Mammary epithelial cell (primary cell): ENCODE measurements at regions of chr2 and their contacts with region 1.

Region 1: DNA sequence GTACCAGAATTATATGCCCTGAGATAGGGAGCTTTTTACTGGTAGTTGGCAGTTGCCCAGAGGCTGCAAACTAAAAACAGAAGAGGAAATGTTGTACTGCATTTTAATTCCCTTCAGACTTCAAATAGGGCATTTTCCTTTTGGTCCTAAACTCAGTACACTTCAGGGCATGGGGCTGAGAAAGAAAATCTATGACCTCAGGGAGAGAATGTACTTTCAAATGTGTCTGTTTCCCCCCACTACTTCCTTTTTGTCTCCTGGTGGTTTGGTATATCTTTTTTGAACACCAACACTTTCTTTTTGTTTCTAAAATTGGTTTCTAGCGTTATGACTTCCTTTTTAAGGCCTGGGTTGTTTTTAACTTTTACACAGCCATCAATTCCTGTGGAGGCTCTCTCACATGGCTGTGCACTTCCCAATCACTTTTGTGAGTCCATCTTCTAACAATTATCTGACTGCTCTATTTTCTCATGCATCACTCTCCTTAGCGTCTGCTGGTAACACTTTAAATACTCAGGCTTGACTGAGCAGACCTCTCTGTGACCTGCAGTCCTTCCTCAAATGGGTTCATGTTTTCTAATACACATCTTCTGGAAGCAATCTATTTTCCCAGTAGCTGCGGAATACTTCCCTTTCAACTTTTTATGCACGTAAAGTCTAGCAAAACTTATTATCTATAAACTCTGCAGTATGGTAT is 596.0 kb downstream of the LRP1B start:
- DNase-seq: no peak
- H3K4me3 ChIP-seq: no peak overlapping the region
- H3K27ac ChIP-seq: no peak overlapping the region
- H3K4me1 ChIP-seq: no peaks in the 10 kb centered on the region
- H3K27me3 ChIP-seq: no peaks in the 10 kb centered on the region
- CTCF ChIP-seq: no peak

Region 2: GRCh38 chr2:141062443-141062842 is 472.4 kb before region 1 on chr2:
- CTCF ChIA-PET with region 1: no interaction called
- dilution Hi-C with region 1: no loop called
- in situ Hi-C with region 1: no loop called
- intact Hi-C with region 1: loop called (anchors 10 kb)
- DNase-seq: no peak
- H3K4me3 ChIP-seq: no peak overlapping the region
- H3K27ac ChIP-seq: no peak overlapping the region
- H3K4me1 ChIP-seq: no peaks in the 10 kb centered on the region
- H3K27me3 ChIP-seq: no peaks in the 10 kb centered on the region
- CTCF ChIP-seq: no peak